ENCODE measurements at regions of chr6 and their contacts with region 1.

Region 1: GRCh38 chr6:47097092-47097945 is 55.2 kb upstream of the ADGRF1 start:
- DNase-seq: peak; percentile 73
- ATAC-seq: peak; percentile 88
- H3K4me3 ChIP-seq: no peak overlapping the region
- H3K27ac ChIP-seq: no peak overlapping the region
- H3K4me1 ChIP-seq: peaks cover 8 to 12% of the 10 kb centered on the region in 2 experiments; a peak in 3 of 4 replicates
- H3K27me3 ChIP-seq: no peaks in the 10 kb centered on the region
- CTCF ChIP-seq: peak; percentile 72 to 92 (median 85)
- POLR2A ChIP-seq: no peak
- RAD21 ChIP-seq: peak; percentile 98

Region 2: GRCh38 chr6:47247227-47247797 is 150.0 kb after region 1 on chr6:
- CTCF ChIA-PET with region 1: interaction called, 3 read pairs
- POLR2A ChIA-PET with region 1: no interaction called
- RAD21 ChIA-PET with region 1: no interaction called
- intact Hi-C with region 1: loop called (anchors 5 kb)
- DNase-seq: no peak
- ATAC-seq: no peak
- H3K4me3 ChIP-seq: no peak overlapping the region
- H3K27ac ChIP-seq: no peak overlapping the region
- H3K4me1 ChIP-seq: peaks cover 2 to 28% of the 10 kb centered on the region in 2 experiments
- H3K27me3 ChIP-seq: no peaks in the 10 kb centered on the region
- CTCF ChIP-seq: no peak
- POLR2A ChIP-seq: no peak
- RAD21 ChIP-seq: no peak

Region 3: DNA sequence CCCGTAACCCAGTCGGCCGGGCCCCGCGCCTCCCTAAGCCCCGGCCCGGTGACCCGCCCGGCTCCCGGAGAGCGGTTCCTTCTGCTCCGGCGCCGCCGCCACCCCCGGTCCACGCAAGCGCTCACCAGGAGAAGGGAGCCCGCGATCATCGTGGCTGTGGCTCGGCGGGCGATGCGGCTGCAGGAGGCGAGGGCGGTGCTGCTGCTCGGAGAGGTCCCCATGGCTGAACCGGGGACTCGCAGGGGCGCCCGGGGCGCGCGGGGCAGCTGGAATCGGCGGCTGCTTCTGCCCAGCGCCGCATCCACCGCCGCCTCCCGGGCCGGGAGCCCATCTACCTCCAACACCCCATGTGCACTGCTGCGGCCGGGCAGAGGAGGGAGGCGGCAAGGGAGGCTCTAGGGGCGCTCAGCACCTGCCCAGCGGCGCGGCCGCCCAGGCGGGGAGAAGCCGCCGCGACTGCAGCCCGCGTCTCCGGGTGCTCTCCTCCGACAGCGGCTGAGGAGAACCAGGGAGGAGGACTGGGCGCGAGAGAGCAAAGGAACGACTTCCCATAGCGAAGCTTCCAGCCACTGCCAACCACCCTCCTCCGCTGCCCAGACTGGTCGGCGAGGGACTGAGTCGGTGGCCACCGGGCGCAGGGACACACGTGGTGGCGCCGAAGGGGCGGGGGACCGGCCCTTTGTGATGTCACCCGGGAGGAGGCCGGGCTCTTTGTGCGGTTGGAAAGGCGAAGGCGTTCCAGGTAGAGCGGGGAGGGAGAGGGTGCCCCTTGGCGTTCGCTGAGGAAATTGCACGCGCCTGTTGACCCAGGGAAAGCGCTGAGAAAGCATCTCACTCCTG is 212.2 kb after region 1 on chr6 and contains the start of gene TNFRSF21:
- CTCF ChIA-PET with region 1: interaction called, 3 read pairs
- POLR2A ChIA-PET with region 1: interaction called, 6 read pairs
- RAD21 ChIA-PET with region 1: no interaction called
- intact Hi-C with region 1: loop called (anchors 1 kb)
- DNase-seq: peak; percentile 89
- ATAC-seq: peak; percentile 94
- H3K4me3 ChIP-seq: peak within 1 kb of the TSS; percentile 73 to 80
- H3K27ac ChIP-seq: peak within 1 kb of the TSS; percentile 70
- H3K4me1 ChIP-seq: peaks cover 6 to 13% of the 10 kb centered on the region in 2 experiments
- H3K27me3 ChIP-seq: no peaks in the 10 kb centered on the region
- CTCF ChIP-seq: peak; percentile 85 to 88 (median 87)
- POLR2A ChIP-seq: peak; percentile 72
- RAD21 ChIP-seq: peak; percentile 97
- total RNA-seq, gene TNFRSF21: 48.3 TPM